ENCODE measurements at regions of chr7 and their contacts with region 1.

Region 1: DNA sequence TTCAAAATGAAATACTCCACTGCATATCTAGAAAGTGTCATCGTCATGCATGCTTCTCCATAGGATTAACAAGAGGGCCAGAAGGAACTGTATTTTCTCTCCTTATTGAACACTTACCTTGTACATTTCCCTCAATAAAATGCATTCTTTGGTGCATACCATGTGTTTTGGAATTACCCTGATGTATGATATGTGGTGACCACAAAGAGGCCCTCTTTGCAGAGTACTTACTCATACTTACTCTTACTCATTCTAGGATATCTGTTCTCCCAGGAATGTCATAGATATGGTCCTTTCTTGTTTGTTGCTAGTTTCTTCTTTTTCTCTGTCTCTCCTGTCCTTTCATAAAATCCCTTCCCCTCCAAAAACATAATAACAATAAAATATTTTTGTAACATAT is 1087.1 kb upstream of the POT1 start:
- H3K4me3 ChIP-seq: no peak overlapping the region
- H3K27ac ChIP-seq: no peak overlapping the region
- H3K4me1 ChIP-seq: no peaks in the 10 kb centered on the region
- CTCF ChIP-seq: no peak

Region 2: DNA sequence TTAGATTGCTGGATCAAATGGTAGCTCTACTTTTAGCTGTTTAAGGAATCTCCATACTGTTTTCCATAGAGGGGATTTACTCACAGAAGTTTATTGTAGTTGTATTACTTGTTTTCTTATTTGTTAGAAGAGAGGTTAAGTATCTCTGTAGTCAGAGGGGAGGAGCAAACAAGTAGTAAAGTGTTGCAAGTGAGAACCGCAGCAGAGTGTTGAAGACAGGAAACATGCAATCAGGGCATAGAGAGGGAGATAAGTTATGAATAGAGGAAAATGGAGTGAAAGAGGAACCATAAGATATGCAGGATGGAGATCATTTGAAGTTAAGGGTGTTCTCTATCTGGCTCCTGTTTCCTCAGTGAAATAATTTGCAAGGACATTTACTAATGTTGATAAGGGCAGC is 1652.4 kb before region 1 on chr7:
- CTCF ChIA-PET with region 1: no interaction called
- POLR2A ChIA-PET with region 1: interaction called, 11 read pairs
- H3K4me3 ChIP-seq: no peak overlapping the region
- H3K27ac ChIP-seq: no peak overlapping the region
- H3K4me1 ChIP-seq: no peaks in the 10 kb centered on the region
- CTCF ChIP-seq: no peak

Measured in HEK293 (cell line).